ENCODE measurements at regions of chr1 and their contacts with region 1.

Region 1: GRCh38 chr1:163263818-163264217 is 57.9 kb upstream of the NUF2 start:
- DNase-seq: no peak
- H3K4me3 ChIP-seq: no peak overlapping the region
- H3K27ac ChIP-seq: no peak overlapping the region
- H3K4me1 ChIP-seq: peaks cover 1% of the 10 kb centered on the region
- H3K27me3 ChIP-seq: no peaks in the 10 kb centered on the region
- CTCF ChIP-seq: no peak

Region 2: GRCh38 chr1:163054181-163054591 is 209.6 kb before region 1 on chr1:
- CTCF ChIA-PET with region 1: no interaction called
- dilution Hi-C with region 1: no loop called
- in situ Hi-C with region 1: no loop called
- intact Hi-C with region 1: no loop called
- DNase-seq: no peak
- H3K4me3 ChIP-seq: no peak overlapping the region
- H3K27ac ChIP-seq: no peak overlapping the region
- H3K4me1 ChIP-seq: no peaks in the 10 kb centered on the region
- H3K27me3 ChIP-seq: no peaks in the 10 kb centered on the region
- CTCF ChIP-seq: no peak

Region 3: DNA sequence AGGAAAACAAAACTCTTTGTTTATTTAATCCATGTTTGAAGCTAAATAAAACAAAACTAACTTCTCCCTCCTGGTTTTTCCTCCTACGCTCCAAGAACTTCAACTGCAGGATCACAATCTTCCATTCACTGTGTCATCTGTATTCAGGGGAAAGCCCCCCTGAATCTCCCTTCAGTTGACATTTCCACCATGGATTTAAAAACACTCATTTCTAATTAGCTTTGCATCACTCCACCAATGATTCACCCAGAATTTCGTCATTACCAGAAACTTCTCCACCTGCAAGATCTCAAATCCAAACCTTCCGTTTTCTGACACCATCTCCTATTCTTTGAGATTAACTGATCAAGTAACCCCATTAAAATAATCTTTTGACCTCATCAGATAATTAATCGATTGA is 50.2 kb before region 1 on chr1:
- CTCF ChIA-PET with region 1: no interaction called
- dilution Hi-C with region 1: loop called (anchors 5 kb)
- in situ Hi-C with region 1: no loop called
- intact Hi-C with region 1: no loop called
- DNase-seq: no peak
- H3K4me3 ChIP-seq: no peak overlapping the region
- H3K27ac ChIP-seq: no peak overlapping the region
- H3K4me1 ChIP-seq: no peaks in the 10 kb centered on the region
- H3K27me3 ChIP-seq: no peaks in the 10 kb centered on the region
- CTCF ChIP-seq: no peak

Region 4: DNA sequence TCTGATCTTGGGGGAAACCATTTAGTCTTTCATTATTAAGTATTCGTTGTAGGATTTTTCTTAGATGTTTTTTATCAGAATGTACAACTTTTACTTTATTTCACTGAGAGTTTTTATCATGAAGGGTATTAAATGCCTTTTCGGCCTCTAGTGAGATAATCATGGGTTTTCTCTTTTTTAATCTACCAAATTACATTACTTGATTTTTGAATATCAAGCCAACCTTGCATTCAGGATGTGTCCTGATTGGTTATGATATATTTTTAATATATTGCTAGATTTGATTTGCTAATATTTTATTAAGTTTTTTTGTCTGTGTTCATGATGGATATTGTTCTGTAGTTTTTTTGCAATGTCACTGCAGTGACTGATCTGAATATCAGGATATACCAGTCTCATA is 67.3 kb after region 1 on chr1:
- CTCF ChIA-PET with region 1: no interaction called
- dilution Hi-C with region 1: no loop called
- in situ Hi-C with region 1: no loop called
- intact Hi-C with region 1: no loop called
- DNase-seq: no peak
- H3K4me3 ChIP-seq: no peak overlapping the region
- H3K27ac ChIP-seq: no peak overlapping the region
- H3K4me1 ChIP-seq: no peaks in the 10 kb centered on the region
- H3K27me3 ChIP-seq: no peaks in the 10 kb centered on the region
- CTCF ChIP-seq: no peak